ENCODE measurements at regions of chr3 and their contacts with region 1.

Region 1: GRCh38 chr3:187783098-187783497 is 37.8 kb upstream of the BCL6 start:
- DNase-seq: no peak
- H3K4me3 ChIP-seq: no peak overlapping the region
- H3K27ac ChIP-seq: no peak overlapping the region
- H3K4me1 ChIP-seq: no peaks in the 10 kb centered on the region
- H3K27me3 ChIP-seq: no peaks in the 10 kb centered on the region
- CTCF ChIP-seq: no peak
- EP300 ChIP-seq: no peak
- POLR2A ChIP-seq: no peak

Region 2: GRCh38 chr3:189292667-189293478 is 1509.8 kb after region 1 on chr3:
- in situ Hi-C with region 1: no loop called
- intact Hi-C with region 1: loop called (anchors 5 kb)
- DNase-seq: peak; percentile 10
- H3K4me3 ChIP-seq: no peak overlapping the region
- H3K27ac ChIP-seq: no peak overlapping the region
- H3K4me1 ChIP-seq: no peaks in the 10 kb centered on the region
- H3K27me3 ChIP-seq: no peaks in the 10 kb centered on the region
- CTCF ChIP-seq: no peak
- EP300 ChIP-seq: no peak
- POLR2A ChIP-seq: no peak